Activated T-helper 2 cell treated with anti-CD3 and anti-CD28 coated beads, Interferon-gamma antibody, Interleukin-2, Interleukin-4, amounts not matched to agents 10 μg/mL and 5 μg/mL and 100 μg/mL, durations not matched to agents 14 hours and 24 hours and 36 hours (primary cell): ENCODE measurements at regions of chr10 and their contacts with region 1.

Region 1: GRCh38 chr10:43594944-43595589 is 11.2 kb upstream of the ZNF485 start:
- DNase-seq: peak; percentile 29
- H3K4me3 Mint-ChIP-seq: peak overlapping the region; percentile 59
- H3K27ac Mint-ChIP-seq: peak overlapping the region; percentile 70
- H3K4me1 Mint-ChIP-seq: peaks cover 26% of the 10 kb centered on the region
- H3K27me3 Mint-ChIP-seq: peaks cover 14% of the 10 kb centered on the region

Region 2: DNA sequence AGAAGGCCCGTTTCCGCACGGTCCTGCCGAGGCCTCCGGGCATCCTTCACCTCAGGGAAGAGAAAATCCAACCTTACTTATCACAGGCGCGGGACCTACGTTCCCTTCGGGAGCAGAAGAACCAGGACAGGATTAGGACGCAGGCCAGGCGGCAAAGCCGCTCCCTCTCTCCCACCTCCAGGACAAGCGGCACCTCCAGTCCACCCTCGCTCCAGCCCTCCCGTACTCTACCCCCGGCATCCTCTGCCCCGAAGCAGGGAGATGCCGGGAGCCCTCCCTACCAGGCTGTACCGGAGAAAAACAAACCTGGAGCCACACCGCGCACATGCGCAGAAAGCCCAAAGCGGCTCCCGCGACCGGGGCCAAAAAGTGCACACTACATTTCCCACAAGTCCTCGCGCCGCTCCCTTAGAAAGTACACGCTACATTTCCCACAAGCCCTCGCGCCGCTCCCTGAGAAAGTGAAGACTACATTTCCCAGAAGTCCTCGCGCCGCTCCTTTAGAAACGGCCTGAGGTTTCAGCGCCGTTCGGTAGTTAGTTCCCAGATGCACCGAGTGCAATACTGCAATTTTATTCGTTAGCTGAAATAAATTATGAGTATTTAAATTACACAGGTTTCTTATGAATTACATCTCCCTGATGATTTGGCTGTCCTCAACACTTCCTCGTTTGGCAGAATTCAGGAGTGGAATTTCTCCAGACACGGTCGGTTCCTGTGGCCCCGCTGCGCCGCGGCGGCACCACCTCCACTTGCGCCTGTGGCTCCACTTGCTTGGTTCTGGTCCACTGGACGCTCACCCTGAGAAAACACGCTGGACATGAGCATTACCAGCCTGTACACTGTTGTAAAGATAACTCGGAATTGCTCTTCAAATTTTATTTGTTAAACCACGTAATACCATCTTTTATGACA is 1042.3 kb before region 1 on chr10:
- intact Hi-C with region 1: loop called (anchors 10 kb)
- DNase-seq: peak; percentile 94
- H3K4me3 Mint-ChIP-seq: peak overlapping the region; percentile 93
- H3K27ac Mint-ChIP-seq: peak overlapping the region; percentile 93
- H3K4me1 Mint-ChIP-seq: peaks cover 27% of the 10 kb centered on the region
- H3K27me3 Mint-ChIP-seq: no peaks in the 10 kb centered on the region

Region 3: DNA sequence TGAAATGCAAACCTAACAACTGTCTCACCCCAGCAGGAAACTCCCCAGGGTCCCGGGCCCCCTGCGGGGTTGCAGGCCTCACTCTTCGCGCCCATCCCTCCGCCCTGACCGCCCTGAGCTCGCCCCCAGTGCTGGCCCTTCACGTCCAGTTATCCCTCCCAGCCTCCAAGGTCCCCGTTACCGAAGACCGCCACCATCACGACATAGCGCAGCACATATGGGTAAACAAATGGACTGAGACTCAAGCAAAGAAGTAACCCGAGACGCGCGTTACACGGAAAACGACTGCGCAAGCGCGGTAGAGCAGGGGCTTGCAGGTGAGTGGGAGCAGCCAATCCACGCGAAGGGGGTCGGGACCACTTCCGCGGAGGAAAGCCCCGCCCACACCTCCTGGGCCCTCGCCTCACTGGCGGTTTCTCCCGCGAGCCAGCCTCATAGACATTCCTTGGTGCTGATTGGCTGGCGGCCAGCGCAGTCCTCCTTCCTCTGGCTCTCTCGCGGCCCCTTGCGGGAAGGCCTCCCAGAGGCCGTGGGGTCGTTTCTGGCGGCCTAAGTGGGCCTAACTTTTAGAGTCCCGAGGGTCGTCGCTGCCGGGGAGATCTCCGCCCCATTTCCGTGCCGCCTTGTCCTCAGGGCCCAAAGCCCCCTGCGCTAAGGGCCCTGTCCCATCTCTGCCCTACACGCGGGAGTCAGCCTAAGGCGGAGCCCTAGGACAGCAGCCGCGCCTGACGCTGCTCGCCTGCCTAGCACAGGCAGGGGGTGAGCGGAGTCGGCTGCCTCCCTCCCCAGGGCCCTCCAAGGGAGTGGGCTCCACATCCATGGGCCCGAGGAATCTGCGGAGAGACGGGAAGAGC is 232.9 kb before region 1 on chr10:
- intact Hi-C with region 1: loop called (anchors 5 kb)
- DNase-seq: peak; percentile 97
- H3K4me3 Mint-ChIP-seq: peak overlapping the region; percentile 97
- H3K27ac Mint-ChIP-seq: peak overlapping the region; percentile 97
- H3K4me1 Mint-ChIP-seq: peaks cover 20% of the 10 kb centered on the region
- H3K27me3 Mint-ChIP-seq: no peaks in the 10 kb centered on the region

Region 4: DNA sequence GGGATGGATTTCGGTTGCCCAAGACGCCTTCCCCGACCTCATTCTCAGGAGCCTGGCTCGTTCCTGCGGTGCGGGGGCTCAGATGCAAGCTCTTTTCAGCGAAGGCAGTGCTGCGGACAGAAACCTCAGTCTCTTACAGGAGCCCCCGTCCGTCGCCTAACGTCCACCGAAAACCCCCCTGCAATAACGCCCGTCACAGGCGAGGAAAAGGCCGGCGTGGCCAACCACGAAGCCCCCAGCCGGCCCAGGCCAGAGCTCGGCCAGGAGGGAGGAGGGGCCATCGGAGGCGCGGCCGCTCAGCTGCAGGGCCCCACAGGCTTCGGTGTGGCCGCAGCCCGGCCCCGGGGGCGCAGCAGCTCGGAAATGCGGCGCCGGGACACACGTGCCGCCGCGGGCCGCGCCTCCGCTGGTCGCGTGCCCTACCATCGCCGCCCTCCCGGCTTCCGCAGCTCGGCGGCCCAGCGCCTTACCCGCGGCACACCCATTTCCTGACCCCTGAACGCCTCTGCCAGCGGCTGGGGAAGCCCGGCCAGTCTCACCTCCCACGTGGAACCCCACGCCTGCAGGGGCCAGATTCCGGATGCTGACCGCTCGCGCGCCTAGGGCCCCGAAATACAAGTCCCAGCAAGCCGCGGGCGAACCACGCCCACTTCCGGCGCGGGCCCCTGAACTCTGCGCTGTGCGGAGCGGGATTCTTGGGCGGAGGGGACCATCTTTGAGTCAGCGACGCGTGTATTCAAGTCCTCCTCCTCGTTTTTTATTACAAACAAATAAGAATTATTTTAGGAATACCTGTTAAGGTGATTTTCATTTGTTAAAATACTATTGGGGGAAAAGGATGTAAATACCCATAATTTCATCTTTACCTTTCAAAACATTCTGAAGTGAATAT is 20.8 kb before region 1 on chr10 and contains the start of gene ZNF239:
- intact Hi-C with region 1: loop called (anchors 1 kb)
- DNase-seq: peak; percentile 60
- H3K4me3 Mint-ChIP-seq: peak within 1 kb of the TSS; percentile 68
- H3K27ac Mint-ChIP-seq: no peak within 1 kb of the TSS
- H3K4me1 Mint-ChIP-seq: peaks cover 23% of the 10 kb centered on the region
- H3K27me3 Mint-ChIP-seq: no peaks in the 10 kb centered on the region
- total RNA-seq, gene ZNF239: 0.66 and 0.97 TPM in 2 replicates

Region 5: GRCh38 chr10:43648398-43649184 is 53.5 kb after region 1 on chr10 and contains the start of gene ZNF32:
- intact Hi-C with region 1: loop called (anchors 1 kb)
- DNase-seq: peak; percentile 74
- H3K4me3 Mint-ChIP-seq: peak within 1 kb of the TSS; percentile 82
- H3K27ac Mint-ChIP-seq: peak within 1 kb of the TSS; percentile 72
- H3K4me1 Mint-ChIP-seq: peaks cover 10% of the 10 kb centered on the region
- H3K27me3 Mint-ChIP-seq: peaks cover 6% of the 10 kb centered on the region
- total RNA-seq, gene ZNF32: 12.1 and 12.9 TPM in 2 replicates

Region 6: GRCh38 chr10:43816351-43817321 is 221.6 kb after region 1 on chr10:
- intact Hi-C with region 1: loop called (anchors 5 kb)
- DNase-seq: peak; percentile 75
- H3K4me3 Mint-ChIP-seq: peak overlapping the region; percentile 10
- H3K27ac Mint-ChIP-seq: peak overlapping the region; percentile 87
- H3K4me1 Mint-ChIP-seq: peaks cover 45% of the 10 kb centered on the region
- H3K27me3 Mint-ChIP-seq: no peaks in the 10 kb centered on the region